ENCODE measurements at regions of chr17 and their contacts with region 1.

Region 1: GRCh38 chr17:59837308-59838051 is 55.3 kb downstream of the TUBD1 start:
- DNase-seq: peak; percentile 99
- H3K4me3 ChIP-seq: peak overlapping the region; percentile 79
- H3K27ac ChIP-seq: peak overlapping the region; percentile 99
- H3K27me3 ChIP-seq: no peaks in the 10 kb centered on the region
- CTCF ChIP-seq: no peak

Region 2: DNA sequence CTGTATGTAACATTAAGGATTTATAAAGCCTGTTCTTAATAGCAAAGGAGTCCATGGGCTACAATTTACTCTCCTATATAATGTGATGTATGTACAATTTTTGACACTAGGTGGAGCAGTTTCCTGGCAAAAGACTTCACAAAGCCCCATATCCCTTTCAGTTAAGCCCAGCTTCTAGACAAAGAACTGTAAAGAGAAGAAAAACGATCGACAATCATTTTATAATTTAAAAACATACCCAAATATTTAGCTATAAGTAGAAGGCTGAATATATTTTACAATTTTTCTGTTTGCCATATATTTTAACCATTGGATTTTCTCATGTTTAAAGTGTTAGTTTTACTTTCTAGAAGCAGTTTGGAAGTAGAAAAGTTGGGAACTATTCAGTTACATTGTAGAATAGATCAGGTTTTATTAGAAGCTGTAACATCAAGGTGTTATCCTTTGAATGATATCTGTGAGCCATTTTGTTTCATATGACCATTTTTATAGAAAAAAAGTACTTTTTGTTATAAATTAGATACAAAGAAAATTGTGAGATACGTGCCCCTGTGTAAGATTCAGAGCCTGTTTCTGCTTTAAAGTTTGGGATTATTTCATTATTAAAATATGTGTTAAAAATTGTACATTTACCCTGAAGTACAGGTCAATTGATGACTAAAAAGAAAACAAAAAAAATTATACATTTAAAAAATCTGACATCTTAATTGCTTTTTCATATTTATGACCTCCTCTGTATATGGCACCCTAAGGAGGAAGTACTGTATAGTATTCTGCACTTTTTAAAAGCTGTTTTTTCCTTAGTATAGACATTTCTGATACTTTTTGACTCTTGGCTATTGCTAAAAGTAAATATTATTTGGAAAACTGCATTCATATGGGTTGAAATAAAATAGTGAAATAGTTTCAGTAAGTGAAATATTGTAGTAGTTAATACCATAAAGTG is 83.7 kb before region 1 on chr17:
- CTCF ChIA-PET with region 1: interaction called, 3 read pairs
- POLR2A ChIA-PET with region 1: interaction called, 221 read pairs
- DNase-seq: peak; percentile 84
- H3K4me3 ChIP-seq: peak overlapping the region; percentile 27
- H3K27ac ChIP-seq: no peak overlapping the region
- H3K27me3 ChIP-seq: no peaks in the 10 kb centered on the region
- CTCF ChIP-seq: peak; percentile 67

Region 3: GRCh38 chr17:59762513-59763374 is 74.7 kb before region 1 on chr17:
- CTCF ChIA-PET with region 1: interaction called, 7 read pairs
- POLR2A ChIA-PET with region 1: interaction called, 29 read pairs
- DNase-seq: no peak
- H3K4me3 ChIP-seq: no peak overlapping the region
- H3K27ac ChIP-seq: no peak overlapping the region
- H3K27me3 ChIP-seq: no peaks in the 10 kb centered on the region
- CTCF ChIP-seq: no peak

Region 4: DNA sequence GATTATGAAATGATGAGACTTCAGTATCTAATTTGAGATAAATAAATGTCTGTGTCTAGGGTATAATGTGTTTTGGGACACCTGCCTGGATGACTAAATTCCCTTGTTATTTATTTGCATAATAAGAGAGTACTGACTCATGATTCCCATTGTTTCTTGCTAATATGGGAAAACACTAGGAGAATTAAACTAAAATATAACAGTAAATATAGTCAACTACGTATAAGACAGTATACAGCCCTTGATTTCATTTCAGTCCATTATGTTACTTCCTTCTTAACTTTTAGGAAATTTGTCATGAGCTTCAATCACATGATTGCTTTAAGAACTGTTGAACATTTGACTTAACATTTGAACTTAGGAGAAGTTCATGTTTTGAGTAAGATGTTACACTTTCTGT is 67.6 kb before region 1 on chr17:
- CTCF ChIA-PET with region 1: interaction called, 7 read pairs
- POLR2A ChIA-PET with region 1: interaction called, 29 read pairs
- DNase-seq: no peak
- H3K4me3 ChIP-seq: no peak overlapping the region
- H3K27ac ChIP-seq: no peak overlapping the region
- H3K27me3 ChIP-seq: no peaks in the 10 kb centered on the region
- CTCF ChIP-seq: no peak

Region 5: GRCh38 chr17:59786536-59787319 is 50.8 kb before region 1 on chr17:
- CTCF ChIA-PET with region 1: no interaction called
- POLR2A ChIA-PET with region 1: interaction called, 62 read pairs
- DNase-seq: peak; percentile 99
- H3K4me3 ChIP-seq: peak overlapping the region; percentile 36
- H3K27ac ChIP-seq: peak overlapping the region; percentile 92
- H3K27me3 ChIP-seq: no peaks in the 10 kb centered on the region
- CTCF ChIP-seq: no peak

Region 6: GRCh38 chr17:59859444-59860025 is 22.1 kb after region 1 on chr17:
- CTCF ChIA-PET with region 1: interaction called, 17 read pairs
- POLR2A ChIA-PET with region 1: interaction called, 4 read pairs
- DNase-seq: no peak
- H3K4me3 ChIP-seq: no peak overlapping the region
- H3K27ac ChIP-seq: no peak overlapping the region
- H3K27me3 ChIP-seq: no peaks in the 10 kb centered on the region
- CTCF ChIP-seq: peak; percentile 68

Region 7: DNA sequence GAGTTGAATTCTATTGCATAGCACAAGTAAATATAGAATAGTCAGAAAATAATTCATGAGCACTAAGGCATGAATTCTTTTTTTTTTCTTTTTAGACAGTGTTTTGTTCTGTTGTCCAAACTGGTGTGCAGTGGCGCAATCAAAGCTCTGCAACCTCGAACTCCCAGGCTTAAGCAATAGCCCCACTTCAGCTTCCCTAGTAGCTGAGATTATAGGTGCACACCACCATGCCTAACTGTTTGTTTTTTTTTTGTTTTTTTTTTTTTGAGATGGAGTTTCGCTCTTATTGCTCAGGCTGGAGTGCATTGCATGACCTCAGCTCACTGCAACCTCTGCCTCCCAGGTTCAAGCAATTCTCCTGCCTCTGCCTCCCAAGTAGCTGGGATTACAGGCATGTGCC is 38.6 kb after region 1 on chr17:
- CTCF ChIA-PET with region 1: no interaction called
- POLR2A ChIA-PET with region 1: no interaction called
- DNase-seq: no peak
- H3K4me3 ChIP-seq: no peak overlapping the region
- H3K27ac ChIP-seq: no peak overlapping the region
- H3K27me3 ChIP-seq: no peaks in the 10 kb centered on the region
- CTCF ChIP-seq: no peak

Measured in AG04450 (cell line).